KBM-7 (cell line): ENCODE measurements at regions of chr5 and their contacts with region 1.

Region 1: GRCh38 chr5:119022017-119022745 is 33.8 kb upstream of the DTWD2 start:
- DNase-seq: peak; percentile 71

Region 2: DNA sequence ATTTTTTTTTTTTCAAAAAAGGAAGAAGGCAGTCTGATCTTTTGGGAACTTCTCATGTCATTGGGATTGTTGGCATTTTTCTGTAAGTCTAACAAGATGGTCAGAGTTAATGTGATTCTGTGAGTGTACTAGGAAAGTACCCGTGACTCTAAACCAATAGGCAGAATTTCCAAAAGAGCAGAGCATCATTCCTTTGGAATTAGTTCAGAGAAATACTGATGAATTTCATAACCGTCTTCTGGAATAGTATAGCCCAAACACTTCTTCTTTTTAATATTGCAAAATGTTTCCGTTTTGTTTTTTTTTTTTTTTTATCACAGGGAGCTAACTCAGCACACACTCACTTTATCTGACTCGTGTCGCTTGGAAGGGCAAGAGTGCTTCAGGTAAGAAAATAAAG is 441.2 kb before region 1 on chr5:
- in situ Hi-C with region 1: no loop called
- DNase-seq: no peak

Region 3: GRCh38 chr5:119322948-119323537 is 300.9 kb after region 1 on chr5:
- in situ Hi-C with region 1: no loop called
- DNase-seq: no peak

Region 4: DNA sequence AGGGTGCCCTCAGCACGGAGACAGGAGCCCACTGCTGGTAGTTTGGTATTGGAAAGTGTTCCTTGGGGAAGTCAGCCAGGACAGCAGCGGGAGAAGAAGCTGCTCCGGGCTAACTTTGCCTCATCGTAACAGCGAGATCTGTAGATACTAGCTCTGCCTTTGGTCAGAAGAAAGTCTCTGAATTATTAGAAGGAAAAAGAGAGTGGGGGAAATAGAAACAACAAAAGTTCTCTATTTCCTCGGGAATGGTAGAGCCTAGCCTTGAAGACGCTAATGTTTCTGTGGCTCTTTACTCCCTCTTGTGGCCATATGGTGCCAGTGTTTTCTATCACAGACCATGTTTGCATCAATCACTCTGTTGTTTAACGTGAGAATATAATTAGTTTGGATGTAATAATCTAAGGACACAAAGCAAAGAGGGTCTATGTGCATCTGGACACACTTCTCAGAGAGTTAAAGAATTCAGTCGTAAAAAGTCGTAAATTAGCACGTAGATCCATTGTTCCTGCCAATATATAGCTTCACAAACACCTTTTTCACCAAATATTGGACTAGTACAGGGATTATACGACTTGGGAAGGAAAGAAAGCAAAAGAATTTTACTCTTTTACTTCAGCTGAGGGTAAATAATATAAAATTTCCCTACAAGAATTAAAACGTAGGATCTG is 389.9 kb after region 1 on chr5:
- in situ Hi-C with region 1: loop called (anchors 25 kb)
- DNase-seq: peak; percentile 85

Region 5: DNA sequence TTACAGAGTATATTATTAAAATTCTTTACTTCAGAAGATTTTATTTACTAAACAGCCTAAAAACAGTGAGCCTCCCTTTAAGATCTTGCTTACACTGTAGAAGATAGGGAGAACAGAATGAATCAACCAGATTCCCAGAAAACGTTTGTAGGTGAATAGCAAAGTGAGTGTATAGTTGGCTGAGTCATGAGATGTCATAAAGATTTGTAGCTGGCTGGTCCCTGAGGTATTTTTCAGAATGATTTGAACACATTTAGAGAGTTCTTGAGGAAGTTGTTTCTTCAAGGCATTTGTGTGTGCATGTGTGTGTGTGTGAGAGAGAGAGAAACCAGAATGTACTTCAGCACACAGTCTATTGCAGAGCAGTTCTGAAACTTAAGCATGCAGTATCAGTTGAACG is 1282.5 kb after region 1 on chr5:
- in situ Hi-C with region 1: no loop called
- DNase-seq: no peak